Mammary epithelial cell (primary cell): ENCODE measurements at regions of chr9 and their contacts with region 1.

Region 1: GRCh38 chr9:132406554-132407122 is at the start of gene TTF1:
- DNase-seq: peak; percentile 79
- H3K4me3 ChIP-seq: peak within 1 kb of the TSS; percentile 46 to 77 (median 71)
- H3K27ac ChIP-seq: peak within 1 kb of the TSS; percentile 64
- H3K4me1 ChIP-seq: peaks cover 25% of the 10 kb centered on the region
- H3K27me3 ChIP-seq: no peaks in the 10 kb centered on the region
- CTCF ChIP-seq: no peak
- total RNA-seq, gene TTF1: 7.5 to 11.4 TPM

Region 2: DNA sequence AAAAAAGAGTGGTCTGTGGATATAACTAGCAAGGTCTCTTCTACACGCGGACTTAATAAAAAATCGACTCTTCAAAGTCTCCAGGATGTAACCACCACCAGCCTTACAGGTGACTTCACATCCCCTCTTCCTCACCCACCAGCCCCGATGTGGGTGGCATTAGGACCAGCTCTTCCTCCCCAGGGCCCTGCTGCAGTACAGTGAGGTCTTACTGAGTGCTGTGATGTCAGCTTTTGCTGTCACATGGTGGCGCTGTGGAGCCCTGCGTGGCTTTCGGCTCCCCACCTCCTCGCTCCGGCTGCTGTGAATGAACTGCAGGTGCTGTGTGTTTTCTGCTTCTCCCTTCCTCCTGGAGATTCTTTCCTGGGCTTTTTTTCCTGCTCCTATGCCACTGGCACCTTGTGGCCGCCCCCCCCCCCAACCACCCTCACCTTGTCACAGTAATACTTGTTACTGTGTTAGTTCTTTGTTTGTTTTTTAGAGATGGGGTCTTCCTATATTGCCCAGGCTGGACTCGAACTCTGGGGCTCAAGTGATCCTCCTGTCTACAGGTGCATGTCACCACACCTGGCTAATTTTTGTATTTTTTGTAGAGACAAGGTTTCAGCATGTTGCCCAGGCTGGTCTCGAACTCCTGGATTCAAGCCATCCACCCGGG is 651.0 kb before region 1 on chr9:
- CTCF ChIA-PET with region 1: no interaction called
- dilution Hi-C with region 1: no loop called
- in situ Hi-C with region 1: no loop called
- intact Hi-C with region 1: loop called (anchors 5 kb)
- DNase-seq: peak; percentile 65
- H3K4me3 ChIP-seq: no peak overlapping the region
- H3K27ac ChIP-seq: no peak overlapping the region
- H3K4me1 ChIP-seq: no peaks in the 10 kb centered on the region
- H3K27me3 ChIP-seq: no peaks in the 10 kb centered on the region
- CTCF ChIP-seq: peak; percentile 91 to 95

Region 3: DNA sequence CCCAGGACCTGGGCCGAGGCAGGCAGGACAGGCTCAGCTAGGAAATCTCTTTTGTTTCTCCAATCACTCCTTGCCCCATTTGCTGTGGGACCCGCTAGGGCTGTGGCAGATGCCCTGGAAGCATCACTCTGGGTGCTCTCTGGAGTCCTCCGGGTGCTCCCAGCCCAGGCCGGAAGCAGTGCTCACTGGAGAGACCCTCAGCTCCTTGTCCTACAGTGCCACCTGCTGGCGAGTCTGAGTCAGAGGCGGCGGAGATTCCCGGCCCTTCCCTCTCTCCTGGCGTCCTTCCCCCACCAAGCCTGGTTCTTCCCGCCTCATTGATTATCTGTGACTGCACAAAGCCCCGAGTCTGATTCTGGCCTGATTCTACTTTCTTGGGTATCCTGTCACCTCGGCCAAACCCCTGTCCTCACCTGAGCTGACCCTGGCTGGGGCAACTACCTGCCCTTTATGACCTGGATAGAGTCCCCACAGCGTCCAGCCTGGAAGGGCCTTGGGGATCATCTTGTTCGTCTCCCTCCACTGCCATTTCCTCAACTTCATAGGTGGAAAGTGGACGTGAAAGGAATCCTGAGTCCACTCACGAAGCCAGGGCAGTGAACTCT is 168.5 kb after region 1 on chr9:
- CTCF ChIA-PET with region 1: no interaction called
- dilution Hi-C with region 1: no loop called
- in situ Hi-C with region 1: loop called in 1 of 2 experiments (anchors 10 kb)
- intact Hi-C with region 1: no loop called
- DNase-seq: peak; percentile 57
- H3K4me3 ChIP-seq: no peak overlapping the region
- H3K27ac ChIP-seq: no peak overlapping the region
- H3K4me1 ChIP-seq: no peaks in the 10 kb centered on the region
- H3K27me3 ChIP-seq: peaks cover 19% of the 10 kb centered on the region
- CTCF ChIP-seq: peak; percentile 65 to 83

Region 4: GRCh38 chr9:132651254-132651653 is 244.6 kb after region 1 on chr9:
- CTCF ChIA-PET with region 1: no interaction called
- dilution Hi-C with region 1: no loop called
- in situ Hi-C with region 1: no loop called
- intact Hi-C with region 1: loop called (anchors 5 kb)
- DNase-seq: peak; percentile 86
- H3K4me3 ChIP-seq: no peak overlapping the region
- H3K27ac ChIP-seq: peak overlapping the region; percentile 7
- H3K4me1 ChIP-seq: peaks cover 38% of the 10 kb centered on the region
- H3K27me3 ChIP-seq: no peaks in the 10 kb centered on the region
- CTCF ChIP-seq: peak; percentile 64 to 72

Region 5: DNA sequence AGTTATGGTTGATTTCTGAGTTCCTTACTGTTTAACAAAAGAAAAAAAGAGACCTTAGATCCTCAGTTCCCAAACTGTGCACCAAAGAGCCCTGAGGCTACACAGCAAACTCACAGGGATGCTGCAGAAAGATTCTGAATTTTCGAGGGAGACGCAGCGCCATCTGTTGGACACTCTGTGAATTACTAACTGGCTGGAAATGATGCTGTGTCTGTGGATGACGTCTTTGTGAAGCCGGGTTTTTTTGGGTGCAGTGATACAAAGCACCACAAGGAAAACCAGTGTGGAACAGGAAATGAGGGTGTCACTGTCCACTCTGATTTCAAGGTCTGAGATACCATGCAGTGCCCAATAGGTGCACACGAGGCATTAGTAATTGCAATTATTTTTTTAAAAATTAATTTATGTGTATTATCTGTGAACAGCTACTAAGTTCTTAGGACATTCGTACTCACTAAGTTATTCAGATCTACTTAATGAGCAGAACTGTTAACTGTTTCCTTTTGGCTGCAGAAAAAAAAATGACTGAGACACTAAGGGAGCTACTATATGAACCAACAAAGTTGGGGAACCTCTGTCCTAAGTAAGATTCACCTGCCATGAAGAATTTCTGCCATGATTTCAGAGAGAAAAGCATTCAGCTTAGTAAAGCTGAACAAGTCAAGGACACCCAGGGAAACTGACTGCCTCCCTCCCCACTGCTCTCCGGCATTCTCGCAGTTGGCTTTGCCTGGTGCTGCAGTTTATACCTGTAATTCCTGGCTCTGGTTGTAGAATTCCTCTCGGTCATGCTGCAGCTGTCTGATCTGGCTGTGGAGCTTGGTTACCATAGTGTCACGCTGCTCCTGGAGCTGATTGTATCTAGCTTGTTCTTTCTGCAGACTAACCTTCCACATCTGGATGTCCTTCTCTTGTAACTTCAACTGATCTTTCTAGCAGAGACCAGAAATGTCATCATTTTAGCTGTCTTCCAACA is 495.5 kb after region 1 on chr9:
- CTCF ChIA-PET with region 1: no interaction called
- dilution Hi-C with region 1: no loop called
- in situ Hi-C with region 1: no loop called
- intact Hi-C with region 1: loop called (anchors 5 kb)
- DNase-seq: peak; percentile 75
- H3K4me3 ChIP-seq: no peak overlapping the region
- H3K27ac ChIP-seq: no peak overlapping the region
- H3K4me1 ChIP-seq: no peaks in the 10 kb centered on the region
- H3K27me3 ChIP-seq: no peaks in the 10 kb centered on the region
- CTCF ChIP-seq: peak; percentile 93 to 99